Cardiac septum (tissue), 1 donor: ENCODE measurements at regions of chr2 and their contacts with region 1.

Region 1: GRCh38 chr2:45935791-45936622 is 284.5 kb downstream of the PRKCE start:
- DNase-seq: peak; percentile 92

Region 2: DNA sequence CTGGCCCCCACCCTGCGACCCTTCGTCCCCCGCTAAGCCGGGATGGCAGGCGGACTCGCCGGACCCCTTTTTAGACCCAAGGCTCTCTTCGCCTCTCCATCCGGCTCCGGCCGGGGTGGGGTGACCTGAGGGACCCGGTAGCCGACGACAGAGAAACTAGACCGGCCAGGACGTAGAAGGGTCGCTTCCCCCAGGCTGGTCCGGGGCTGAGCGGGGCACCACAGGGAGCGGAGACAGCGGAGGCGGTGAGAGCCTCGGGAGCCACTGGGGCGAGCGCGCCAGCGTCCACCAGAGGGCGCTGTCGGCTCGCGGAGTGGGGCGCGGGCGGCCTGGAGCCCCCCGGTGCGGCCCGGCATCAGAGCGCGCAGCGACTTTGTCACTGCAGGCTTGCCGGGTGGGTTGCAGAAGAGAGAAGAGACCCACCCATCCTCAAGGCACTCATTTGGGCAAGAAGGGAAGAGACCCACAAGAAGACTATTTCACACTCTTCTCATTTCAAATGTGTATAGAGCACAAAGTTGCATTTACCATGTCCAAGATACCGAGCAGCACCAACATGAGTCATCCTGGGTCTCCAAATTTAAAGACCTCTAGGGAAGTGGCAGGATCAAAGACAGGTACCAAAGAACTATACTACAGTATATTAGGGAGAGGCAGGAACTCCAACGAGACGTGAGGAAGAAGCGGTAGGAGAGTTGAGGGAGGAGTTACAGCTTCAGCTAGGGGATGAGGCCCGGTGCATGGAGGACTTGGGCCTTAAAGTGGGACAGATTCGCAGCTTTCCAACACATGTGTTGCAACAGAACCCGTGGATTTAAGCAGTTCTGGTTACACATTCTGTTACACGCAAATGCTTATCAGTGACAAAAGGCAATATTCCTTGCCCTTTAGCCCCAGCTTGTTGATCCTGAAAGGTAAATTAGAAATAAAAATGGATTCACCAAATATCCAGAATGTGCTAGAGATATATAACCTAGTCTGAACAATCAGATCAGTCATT is 292.2 kb before region 1 on chr2:
- intact Hi-C with region 1: loop called (anchors 1 kb)
- DNase-seq: peak; percentile 87

Region 3: GRCh38 chr2:45654240-45654639 is 281.8 kb before region 1 on chr2:
- intact Hi-C with region 1: no loop called
- DNase-seq: no peak